MCF 10A (cell line): ENCODE measurements at regions of chr4 and their contacts with region 1.

Region 1: GRCh38 chr4:154559494-154560418 is 3.1 kb upstream of the FGB start:
- DNase-seq: peak; percentile 77
- H3K4me3 Mint-ChIP-seq: no peak overlapping the region
- H3K27ac Mint-ChIP-seq: no peak overlapping the region
- H3K4me1 Mint-ChIP-seq: peaks cover 18% of the 10 kb centered on the region
- H3K27me3 Mint-ChIP-seq: no peaks in the 10 kb centered on the region
- CTCF ChIP-seq: peak; percentile 78

Region 2: DNA sequence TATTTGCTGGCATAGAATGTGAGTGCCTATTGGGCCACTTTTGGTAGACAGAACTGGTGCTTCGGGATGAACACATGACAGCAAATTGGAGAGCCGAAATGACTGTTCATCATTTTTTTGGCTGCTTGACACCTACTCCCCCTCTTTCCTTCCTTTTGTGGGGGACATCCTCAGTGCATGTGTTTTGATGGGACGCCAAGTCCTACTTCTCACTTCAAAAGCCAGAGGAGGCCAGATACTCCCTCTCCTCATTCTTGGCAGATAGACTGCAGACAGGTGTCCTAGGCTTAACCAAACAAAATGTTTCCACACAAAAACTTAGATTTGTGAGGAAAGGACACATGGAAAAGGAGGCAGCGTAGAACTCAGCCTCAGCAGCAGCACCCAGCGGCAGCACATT is 130.6 kb before region 1 on chr4:
- CTCF ChIA-PET with region 1: no interaction called
- POLR2A ChIA-PET with region 1: no interaction called
- intact Hi-C with region 1: no loop called
- DNase-seq: no peak
- H3K4me3 Mint-ChIP-seq: no peak overlapping the region
- H3K27ac Mint-ChIP-seq: no peak overlapping the region
- H3K4me1 Mint-ChIP-seq: no peaks in the 10 kb centered on the region
- H3K27me3 Mint-ChIP-seq: no peaks in the 10 kb centered on the region
- CTCF ChIP-seq: no peak

Region 3: GRCh38 chr4:154574311-154574710 is 14.6 kb after region 1 on chr4:
- CTCF ChIA-PET with region 1: interaction called, 26 read pairs
- POLR2A ChIA-PET with region 1: no interaction called
- intact Hi-C with region 1: no loop called
- DNase-seq: no peak
- H3K4me3 Mint-ChIP-seq: no peak overlapping the region
- H3K27ac Mint-ChIP-seq: no peak overlapping the region
- H3K4me1 Mint-ChIP-seq: peaks cover under 1% of the 10 kb centered on the region
- H3K27me3 Mint-ChIP-seq: no peaks in the 10 kb centered on the region
- CTCF ChIP-seq: no peak

Region 4: GRCh38 chr4:154595807-154596206 is 36.1 kb after region 1 on chr4:
- CTCF ChIA-PET with region 1: interaction called, 13 read pairs
- POLR2A ChIA-PET with region 1: no interaction called
- intact Hi-C with region 1: no loop called
- DNase-seq: peak; percentile 35
- H3K4me3 Mint-ChIP-seq: no peak overlapping the region
- H3K27ac Mint-ChIP-seq: no peak overlapping the region
- H3K4me1 Mint-ChIP-seq: peaks cover 5% of the 10 kb centered on the region
- H3K27me3 Mint-ChIP-seq: no peaks in the 10 kb centered on the region
- CTCF ChIP-seq: no peak

Region 5: GRCh38 chr4:154634058-154634457 is 74.3 kb after region 1 on chr4:
- CTCF ChIA-PET with region 1: interaction called, 935 read pairs
- POLR2A ChIA-PET with region 1: no interaction called
- intact Hi-C with region 1: no loop called
- DNase-seq: no peak
- H3K4me3 Mint-ChIP-seq: no peak overlapping the region
- H3K27ac Mint-ChIP-seq: no peak overlapping the region
- H3K4me1 Mint-ChIP-seq: no peaks in the 10 kb centered on the region
- H3K27me3 Mint-ChIP-seq: no peaks in the 10 kb centered on the region
- CTCF ChIP-seq: no peak

Region 6: DNA sequence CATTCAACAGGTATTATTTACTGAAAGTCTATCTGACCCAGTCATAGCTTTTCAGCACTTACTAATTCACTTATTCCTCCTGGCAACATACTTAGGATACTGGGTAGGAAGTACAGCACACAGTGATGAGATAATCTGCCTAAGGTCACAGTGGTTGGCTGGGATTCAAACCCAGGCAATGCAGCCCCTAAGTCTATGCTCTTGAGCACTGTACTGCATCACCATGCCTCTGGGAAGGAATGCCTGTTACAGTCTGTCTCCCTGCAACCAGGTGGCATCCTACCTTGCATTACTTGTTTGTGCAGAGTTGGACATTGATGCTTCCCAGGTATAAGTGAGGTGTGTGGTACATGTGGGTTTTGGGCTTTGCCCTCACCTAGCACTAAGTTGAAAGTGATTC is 162.5 kb after region 1 on chr4:
- CTCF ChIA-PET with region 1: no interaction called
- POLR2A ChIA-PET with region 1: no interaction called
- intact Hi-C with region 1: no loop called
- DNase-seq: no peak
- H3K4me3 Mint-ChIP-seq: no peak overlapping the region
- H3K27ac Mint-ChIP-seq: no peak overlapping the region
- H3K4me1 Mint-ChIP-seq: peaks cover 25% of the 10 kb centered on the region
- H3K27me3 Mint-ChIP-seq: no peaks in the 10 kb centered on the region
- CTCF ChIP-seq: no peak

Region 7: GRCh38 chr4:154779362-154779947 is 219.7 kb after region 1 on chr4:
- CTCF ChIA-PET with region 1: interaction called, 7 read pairs
- POLR2A ChIA-PET with region 1: no interaction called
- intact Hi-C with region 1: loop called (anchors 2 kb)
- DNase-seq: peak; percentile 57
- H3K4me3 Mint-ChIP-seq: no peak overlapping the region
- H3K27ac Mint-ChIP-seq: no peak overlapping the region
- H3K4me1 Mint-ChIP-seq: no peaks in the 10 kb centered on the region
- H3K27me3 Mint-ChIP-seq: no peaks in the 10 kb centered on the region
- CTCF ChIP-seq: peak; percentile 67